Thyroid gland (tissue), 4 donors: ENCODE measurements at regions of chr12 and their contacts with region 1.

Region 1: GRCh38 chr12:78470354-78471195 is 394.0 kb upstream of the SYT1 start:
- DNase-seq: peak; percentile 40 to 59
- H3K4me3 ChIP-seq: no peak overlapping the region
- H3K27ac ChIP-seq: no peak overlapping the region
- H3K4me1 ChIP-seq: no peaks in the 10 kb centered on the region
- H3K27me3 ChIP-seq: no peaks in the 10 kb centered on the region
- CTCF ChIP-seq: peak in 4 of 6 experiments; percentile 49 to 51 (median 51)
- POLR2A ChIP-seq: no peak

Region 2: DNA sequence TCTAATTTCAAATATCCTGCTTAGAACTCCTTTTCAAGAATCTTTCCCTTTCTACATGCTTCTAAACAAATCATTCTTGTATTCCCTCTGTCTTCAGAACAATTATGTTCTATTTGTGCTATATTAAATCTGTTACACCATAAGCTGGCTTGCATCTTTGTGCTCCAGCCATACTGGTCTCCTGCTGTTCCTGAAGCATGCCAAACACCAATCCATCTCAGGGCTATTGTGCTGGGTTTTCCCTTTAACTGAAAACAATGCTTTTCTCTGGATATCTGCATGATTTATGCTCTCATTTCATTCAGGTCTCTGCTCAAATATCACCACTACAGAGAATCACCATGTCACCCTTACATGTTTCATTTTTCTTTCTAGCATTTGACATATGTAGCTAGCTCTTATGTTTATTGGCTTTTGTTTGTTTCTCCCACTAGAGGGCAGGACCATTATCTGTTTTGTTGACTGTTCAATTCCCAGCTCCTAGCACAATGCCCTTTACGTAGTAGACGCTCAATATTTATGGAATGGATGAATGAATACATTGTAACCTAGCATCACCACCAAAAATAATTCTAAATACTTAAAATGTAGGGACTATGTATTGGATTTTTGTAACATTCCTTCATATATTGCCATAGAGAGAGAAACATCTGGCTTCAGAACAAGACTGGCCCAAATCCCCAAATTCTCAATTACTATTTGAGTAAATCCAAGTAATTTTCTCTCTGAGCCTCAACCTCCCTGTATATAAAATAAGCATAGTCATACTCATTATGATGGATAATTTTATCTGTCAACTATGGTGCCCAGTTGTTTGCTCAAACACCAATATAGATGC is 92.0 kb after region 1 on chr12:
- intact Hi-C with region 1: loop called (anchors 10 kb)
- DNase-seq: no peak
- H3K4me3 ChIP-seq: no peak overlapping the region
- H3K27ac ChIP-seq: no peak overlapping the region
- H3K4me1 ChIP-seq: no peaks in the 10 kb centered on the region
- H3K27me3 ChIP-seq: no peaks in the 10 kb centered on the region
- CTCF ChIP-seq: no peak
- POLR2A ChIP-seq: no peak

Region 3: GRCh38 chr12:78584695-78585531 is 114.3 kb after region 1 on chr12:
- intact Hi-C with region 1: no loop called
- DNase-seq: no peak
- H3K4me3 ChIP-seq: no peak overlapping the region
- H3K27ac ChIP-seq: no peak overlapping the region
- H3K4me1 ChIP-seq: no peaks in the 10 kb centered on the region
- H3K27me3 ChIP-seq: no peaks in the 10 kb centered on the region
- CTCF ChIP-seq: peak in 1 of 6 experiments; percentile 13
- POLR2A ChIP-seq: no peak